ENCODE measurements at regions of chr1 and their contacts with region 1.

Region 1: DNA sequence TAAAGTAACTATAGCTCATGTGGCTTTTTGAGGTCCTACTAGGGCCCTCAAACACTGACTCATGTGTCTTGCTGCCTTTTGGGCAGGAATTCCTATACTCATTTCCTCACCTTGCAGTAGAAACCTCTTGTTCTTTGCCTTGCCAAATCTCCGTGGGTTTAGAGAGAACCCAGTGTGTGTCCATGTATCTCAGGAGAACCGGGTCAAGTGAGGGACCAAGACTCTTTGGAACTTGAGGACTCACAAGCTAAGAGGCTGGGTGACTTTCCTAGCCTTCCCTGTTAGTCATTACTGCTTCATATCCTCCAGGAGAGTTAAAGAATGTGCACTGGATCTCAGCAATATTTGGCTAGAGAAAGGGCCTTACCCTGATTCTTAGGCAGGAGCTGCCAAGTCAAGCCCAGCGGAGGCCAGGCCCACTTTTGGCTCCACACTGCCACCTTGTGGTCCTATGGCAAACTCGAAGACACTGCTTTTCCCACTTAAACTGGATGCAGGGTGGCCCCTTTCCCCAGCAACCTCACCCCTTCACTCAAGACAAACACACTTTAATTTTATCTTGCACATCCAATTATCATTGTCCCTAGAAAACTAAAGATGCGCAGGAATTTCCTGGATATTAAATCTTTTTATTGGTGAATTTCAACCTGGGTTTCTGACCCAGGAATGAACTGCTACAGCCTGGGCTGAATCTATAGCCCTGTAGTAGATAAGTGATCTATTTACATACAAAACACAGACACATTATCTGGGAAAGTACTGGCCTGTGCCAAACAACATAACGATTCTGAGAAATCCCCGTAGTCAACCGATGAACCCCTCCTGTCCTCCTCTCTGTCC is 10.6 kb downstream of the AVPR1B start:
- DNase-seq: peak; percentile 67 to 81 (median 76)
- H3K4me3 ChIP-seq: no peak overlapping the region
- H3K4me3 Mint-ChIP-seq: no peak overlapping the region
- H3K27ac ChIP-seq: no peak overlapping the region
- H3K27ac Mint-ChIP-seq: no peak overlapping the region
- H3K4me1 ChIP-seq: peaks cover 22% of the 10 kb centered on the region in 2 donors
- H3K4me1 Mint-ChIP-seq: peaks cover 29% of the 10 kb centered on the region
- H3K27me3 ChIP-seq: no peaks in the 10 kb centered on the region
- H3K27me3 Mint-ChIP-seq: peaks cover 0 to 5% (median 4%) of the 10 kb centered on the region in 3 donors
- CTCF ChIP-seq: peak; percentile 88

Region 2: DNA sequence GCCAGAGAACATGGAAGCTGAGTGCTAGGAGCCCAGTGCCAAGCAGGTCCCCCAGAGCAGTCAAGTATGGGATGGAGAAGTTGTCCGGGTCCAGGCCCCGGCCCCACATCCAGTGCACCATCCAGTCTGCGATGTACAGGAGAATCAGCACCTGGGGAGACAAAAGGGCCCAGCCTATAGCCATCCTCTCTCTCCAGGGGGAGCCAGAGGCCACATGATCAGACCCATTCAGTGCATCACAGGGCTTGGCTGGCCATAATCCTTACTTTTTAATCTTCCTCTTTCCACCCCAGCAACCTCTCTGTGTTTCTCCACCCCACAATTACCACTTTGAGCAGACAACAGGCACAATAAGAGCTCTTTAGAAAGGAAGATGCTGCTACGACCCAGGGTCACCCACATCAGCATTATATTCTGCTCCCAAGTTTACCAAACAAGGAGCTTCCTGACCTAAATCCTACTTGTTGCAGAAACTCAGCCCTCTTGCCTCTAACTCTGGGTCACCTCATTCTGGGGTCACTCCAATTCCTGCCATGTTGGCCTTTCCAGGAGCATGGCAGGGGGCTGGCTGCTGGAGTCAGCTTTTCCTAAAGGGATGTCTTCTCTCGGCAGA is 314.9 kb before region 1 on chr1:
- intact Hi-C with region 1: loop called (anchors 5 kb)
- DNase-seq: peak; percentile 51 to 65 (median 63)
- H3K4me3 ChIP-seq: no peak overlapping the region
- H3K4me3 Mint-ChIP-seq: no peak overlapping the region
- H3K27ac ChIP-seq: no peak overlapping the region
- H3K27ac Mint-ChIP-seq: peak overlapping the region in 1 of 7 donors; percentile 39
- H3K4me1 ChIP-seq: peaks cover 19% of the 10 kb centered on the region in 2 donors
- H3K4me1 Mint-ChIP-seq: peaks cover 27% of the 10 kb centered on the region
- H3K27me3 ChIP-seq: no peaks in the 10 kb centered on the region
- H3K27me3 Mint-ChIP-seq: no peaks in the 10 kb centered on the region
- CTCF ChIP-seq: peak; percentile 80

Region 3: GRCh38 chr1:205919026-205919746 is 187.4 kb before region 1 on chr1:
- intact Hi-C with region 1: loop called (anchors 2 to 10 kb)
- DNase-seq: peak; percentile 66 to 70 (median 66)
- H3K4me3 ChIP-seq: no peak overlapping the region
- H3K4me3 Mint-ChIP-seq: no peak overlapping the region
- H3K27ac ChIP-seq: no peak overlapping the region
- H3K27ac Mint-ChIP-seq: peak overlapping the region in 2 of 7 donors; percentile 24 to 75
- H3K4me1 ChIP-seq: peaks cover 5 to 26% of the 10 kb centered on the region in 2 donors
- H3K4me1 Mint-ChIP-seq: peaks cover 19% of the 10 kb centered on the region
- H3K27me3 ChIP-seq: no peaks in the 10 kb centered on the region
- H3K27me3 Mint-ChIP-seq: peaks cover 3 to 14% (median 8%) of the 10 kb centered on the region in 3 donors
- CTCF ChIP-seq: peak; percentile 89

Region 4: DNA sequence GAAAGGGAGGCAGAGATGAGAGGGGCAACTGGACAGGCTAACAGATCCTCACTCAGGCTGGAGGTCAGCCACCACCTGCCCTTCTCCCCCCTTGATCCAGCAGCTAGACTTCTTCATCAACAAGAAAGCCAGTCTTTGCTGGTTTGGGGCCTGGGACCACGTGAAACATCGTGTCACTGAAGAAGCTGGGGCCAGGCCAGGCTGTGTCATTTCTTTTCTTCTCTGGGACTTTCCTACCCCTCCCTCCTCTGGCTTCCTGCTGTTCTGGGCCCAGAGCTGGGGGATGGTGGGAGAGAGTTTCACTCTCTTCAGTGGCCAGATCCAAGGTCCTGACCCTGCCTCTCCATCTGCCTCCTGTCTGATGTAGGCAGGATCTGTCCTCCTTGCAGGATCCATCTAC is 145.1 kb before region 1 on chr1:
- intact Hi-C with region 1: no loop called
- DNase-seq: peak in 2 of 3 donors; percentile 56 to 59
- H3K4me3 ChIP-seq: no peak overlapping the region
- H3K4me3 Mint-ChIP-seq: no peak overlapping the region
- H3K27ac ChIP-seq: no peak overlapping the region
- H3K27ac Mint-ChIP-seq: peak overlapping the region in 3 of 7 donors; percentile 6 to 76 (median 20)
- H3K4me1 ChIP-seq: peaks cover 18 to 33% of the 10 kb centered on the region in 2 donors
- H3K4me1 Mint-ChIP-seq: peaks cover 32% of the 10 kb centered on the region
- H3K27me3 ChIP-seq: no peaks in the 10 kb centered on the region
- H3K27me3 Mint-ChIP-seq: peaks cover 5 to 11% (median 7%) of the 10 kb centered on the region in 3 donors
- CTCF ChIP-seq: no peak

Region 5: DNA sequence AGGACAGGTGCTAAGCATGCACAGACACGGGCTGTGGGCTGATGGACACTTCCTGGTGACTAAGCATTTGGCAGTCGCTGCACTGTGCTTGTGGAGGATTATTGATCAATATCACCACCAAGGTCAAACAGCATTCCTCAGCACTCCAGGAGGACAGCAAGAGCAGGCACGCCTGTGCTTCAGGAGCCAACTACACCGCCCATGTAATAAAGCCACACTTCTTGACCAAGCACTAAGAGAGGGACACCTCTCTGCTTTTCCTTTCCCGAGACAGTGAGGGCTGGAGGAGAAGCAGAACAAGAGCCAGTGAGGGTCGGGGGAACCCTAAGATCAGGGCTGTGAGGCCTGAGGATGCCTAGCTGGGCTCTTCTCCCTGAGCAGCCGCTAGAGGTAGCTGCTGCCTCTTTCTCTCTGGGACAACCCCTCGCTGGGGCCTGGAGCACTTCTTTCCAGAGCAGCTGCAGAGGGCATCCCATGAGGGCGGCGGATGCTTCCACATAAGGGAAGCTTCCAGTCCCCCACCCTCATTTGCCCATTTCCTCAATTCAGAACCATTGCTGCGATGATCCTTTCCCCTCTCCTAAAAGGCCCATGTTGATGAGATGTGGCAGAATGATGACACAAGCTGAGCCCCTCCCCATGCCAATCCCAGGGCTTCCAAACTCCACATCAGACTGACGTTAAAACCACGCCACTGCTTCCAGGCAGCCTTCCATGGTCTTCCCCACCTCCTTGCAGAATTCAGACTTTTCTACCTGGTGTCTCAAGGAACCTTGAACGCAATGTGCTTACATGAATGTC is 122.4 kb before region 1 on chr1:
- intact Hi-C with region 1: loop called (anchors 1 to 2 kb)
- DNase-seq: peak; percentile 36 to 50 (median 42)
- H3K4me3 ChIP-seq: no peak overlapping the region
- H3K4me3 Mint-ChIP-seq: no peak overlapping the region
- H3K27ac ChIP-seq: no peak overlapping the region
- H3K27ac Mint-ChIP-seq: peak overlapping the region in 1 of 7 donors; percentile 46
- H3K4me1 ChIP-seq: peaks cover 0 to 12% of the 10 kb centered on the region in 2 donors
- H3K4me1 Mint-ChIP-seq: peaks cover 15% of the 10 kb centered on the region
- H3K27me3 ChIP-seq: no peaks in the 10 kb centered on the region
- H3K27me3 Mint-ChIP-seq: peaks cover 0 to 2% (median 0%) of the 10 kb centered on the region in 3 donors
- CTCF ChIP-seq: peak; percentile 78

Region 6: GRCh38 chr1:206030714-206031113 is 75.8 kb before region 1 on chr1:
- intact Hi-C with region 1: loop called (anchors 2 to 5 kb)
- DNase-seq: peak; percentile 56 to 69 (median 69)
- H3K4me3 ChIP-seq: no peak overlapping the region
- H3K4me3 Mint-ChIP-seq: no peak overlapping the region
- H3K27ac ChIP-seq: no peak overlapping the region
- H3K27ac Mint-ChIP-seq: no peak overlapping the region
- H3K4me1 ChIP-seq: peaks cover 24 to 32% of the 10 kb centered on the region in 2 donors
- H3K4me1 Mint-ChIP-seq: peaks cover 31% of the 10 kb centered on the region
- H3K27me3 ChIP-seq: no peaks in the 10 kb centered on the region
- H3K27me3 Mint-ChIP-seq: peaks cover 0 to 6% (median 5%) of the 10 kb centered on the region in 3 donors
- CTCF ChIP-seq: peak; percentile 91

Region 7: GRCh38 chr1:206066479-206067171 is 39.9 kb before region 1 on chr1:
- intact Hi-C with region 1: no loop called
- DNase-seq: peak; percentile 36 to 67 (median 40)
- H3K4me3 ChIP-seq: no peak overlapping the region
- H3K4me3 Mint-ChIP-seq: no peak overlapping the region
- H3K27ac ChIP-seq: peak overlapping the region; percentile 15 to 21
- H3K27ac Mint-ChIP-seq: peak overlapping the region in 6 of 7 donors; percentile 33 to 87 (median 72)
- H3K4me1 ChIP-seq: peaks cover 29 to 37% of the 10 kb centered on the region in 2 donors
- H3K4me1 Mint-ChIP-seq: peaks cover 39% of the 10 kb centered on the region
- H3K27me3 ChIP-seq: no peaks in the 10 kb centered on the region
- H3K27me3 Mint-ChIP-seq: peaks cover 0 to 2% (median 0%) of the 10 kb centered on the region in 3 donors
- CTCF ChIP-seq: no peak